Activated naive CD4-positive, alpha-beta T cell treated with anti-CD3 and anti-CD28 coated beads for 36 hours (primary cell): ENCODE measurements at regions of chr20 and their contacts with region 1.

Region 1: DNA sequence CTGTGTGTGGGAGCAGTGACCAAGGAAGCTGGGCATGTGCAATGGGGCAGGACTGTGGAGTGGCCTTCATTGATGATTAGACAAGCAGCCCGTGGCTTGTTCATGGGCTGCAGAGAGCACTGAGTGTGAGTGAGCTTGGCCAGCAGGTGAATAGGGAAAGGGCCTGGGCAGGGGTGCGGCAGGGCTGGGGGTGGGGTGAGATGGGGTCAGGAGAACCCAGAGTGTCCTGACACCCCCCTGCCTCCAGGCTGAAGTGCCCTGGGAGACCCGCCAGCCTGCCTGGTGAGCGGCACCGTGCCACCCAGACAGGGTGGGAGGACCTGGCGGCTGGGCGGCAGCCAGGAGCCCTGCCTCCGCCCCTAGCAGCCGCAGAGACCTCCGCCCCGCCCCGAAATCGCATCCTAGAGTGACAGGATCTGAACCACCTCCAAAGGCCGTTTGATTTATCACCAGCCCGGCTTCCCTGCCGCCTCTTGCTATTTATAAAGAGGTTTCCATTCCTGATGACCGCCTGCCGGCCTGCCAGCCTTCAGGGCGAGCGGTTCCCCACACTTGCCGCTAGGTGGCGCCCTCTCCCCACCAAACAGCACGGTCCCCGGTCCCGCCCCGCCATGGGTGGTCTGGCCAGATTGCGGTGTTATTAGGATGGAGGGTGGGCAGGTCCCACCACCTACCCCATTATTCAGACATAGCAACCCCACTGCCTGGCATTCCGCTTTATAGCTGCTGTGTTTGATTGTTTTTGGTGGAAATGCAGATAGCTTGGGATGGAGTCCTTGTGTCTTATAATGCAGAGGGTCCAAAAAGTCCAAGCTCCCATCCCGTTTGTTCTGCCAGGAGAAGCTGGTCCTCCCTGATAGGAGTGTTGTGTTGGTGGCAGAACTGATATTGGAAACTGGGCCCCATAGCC is 3.5 kb downstream of the MYLK2 start:
- DNase-seq: peak; percentile 79
- H3K4me3 Mint-ChIP-seq: no peak overlapping the region
- H3K27ac Mint-ChIP-seq: no peak overlapping the region
- H3K4me1 Mint-ChIP-seq: peaks cover 4% of the 10 kb centered on the region
- H3K27me3 Mint-ChIP-seq: peaks cover 3% of the 10 kb centered on the region

Region 2: DNA sequence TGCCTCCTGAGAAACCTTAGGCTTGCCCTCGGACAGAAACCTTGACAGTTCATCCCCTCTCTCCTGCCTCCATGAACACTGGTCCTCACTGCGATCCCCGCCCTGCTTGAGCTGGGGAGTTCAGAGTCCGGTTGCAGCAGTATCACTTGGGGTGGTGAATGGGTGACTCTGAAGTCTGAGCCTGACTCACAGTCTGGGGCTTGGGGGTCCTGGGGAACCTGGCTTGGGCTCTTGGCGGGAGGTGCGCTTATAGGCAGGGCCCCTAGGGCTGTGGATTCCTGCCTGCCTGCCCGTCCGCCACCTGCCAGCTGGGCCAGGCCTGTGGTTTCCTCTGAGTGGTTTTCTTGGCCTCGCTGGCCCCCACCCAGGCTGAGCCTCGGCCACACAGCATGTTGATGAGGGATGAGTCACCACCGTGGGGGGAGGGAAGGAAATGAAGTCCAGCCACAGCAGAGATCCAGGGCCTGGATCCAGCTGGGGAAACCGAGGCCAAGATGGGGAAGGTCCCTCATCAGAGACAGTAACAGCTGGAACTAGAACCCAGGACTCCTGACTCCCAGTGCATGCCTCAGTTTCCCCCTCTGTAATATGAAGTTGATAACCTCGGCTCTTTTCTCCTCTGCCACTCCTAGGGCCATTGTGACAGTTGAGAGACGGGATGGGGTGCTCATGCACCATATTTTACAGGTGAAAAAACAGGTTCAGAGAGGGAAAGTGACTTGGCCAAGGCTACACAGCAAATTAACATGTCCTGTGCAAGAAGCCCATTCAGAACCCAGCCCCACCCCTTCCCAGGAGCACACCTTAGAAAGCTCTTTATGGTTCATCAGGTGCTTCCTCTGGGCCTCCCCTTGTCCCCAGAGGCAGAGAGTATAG is 13.5 kb after region 1 on chr20:
- CTCF ChIA-PET with region 1: interaction called, 18 read pairs
- intact Hi-C with region 1: no loop called
- DNase-seq: peak; percentile 18
- H3K4me3 Mint-ChIP-seq: no peak overlapping the region
- H3K27ac Mint-ChIP-seq: no peak overlapping the region
- H3K4me1 Mint-ChIP-seq: peaks cover 3% of the 10 kb centered on the region
- H3K27me3 Mint-ChIP-seq: no peaks in the 10 kb centered on the region

Region 3: DNA sequence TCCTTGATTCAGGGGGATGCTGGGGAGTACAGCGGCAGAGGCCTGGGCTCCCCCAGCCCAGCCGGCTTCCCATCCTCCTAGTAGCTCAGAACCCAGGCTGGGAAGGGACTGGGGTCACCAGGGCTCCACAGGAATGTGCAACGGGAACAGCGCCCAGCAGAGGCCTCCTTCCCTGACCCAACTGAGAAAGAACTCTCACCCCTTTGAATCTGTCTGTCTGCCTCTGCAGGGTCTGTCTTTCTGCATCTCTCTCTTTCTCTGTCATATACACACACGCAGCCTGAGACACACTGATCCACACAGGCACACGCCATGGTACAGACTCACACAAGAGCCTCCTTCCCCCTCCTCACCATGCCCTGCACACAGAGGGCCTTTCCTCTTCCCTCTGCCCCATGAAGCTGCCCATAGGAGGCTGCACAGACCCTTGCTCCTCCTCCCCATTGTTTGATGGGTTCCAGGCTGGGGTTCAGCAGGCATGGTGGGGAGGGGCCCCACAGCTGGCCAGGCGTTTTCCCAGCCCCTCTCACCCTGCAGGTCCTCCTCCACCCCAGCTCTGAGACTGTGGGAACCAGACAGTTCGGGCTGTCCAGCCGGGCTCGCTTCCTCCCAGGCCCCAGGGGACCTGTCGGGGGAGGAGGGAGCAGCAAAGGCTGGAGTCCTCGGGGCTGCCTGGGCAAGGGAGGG is 19.9 kb after region 1 on chr20:
- CTCF ChIA-PET with region 1: interaction called, 53 read pairs
- intact Hi-C with region 1: loop called (anchors 1 kb)
- DNase-seq: no peak
- H3K4me3 Mint-ChIP-seq: no peak overlapping the region
- H3K27ac Mint-ChIP-seq: no peak overlapping the region
- H3K4me1 Mint-ChIP-seq: no peaks in the 10 kb centered on the region
- H3K27me3 Mint-ChIP-seq: peaks cover 1% of the 10 kb centered on the region

Region 4: DNA sequence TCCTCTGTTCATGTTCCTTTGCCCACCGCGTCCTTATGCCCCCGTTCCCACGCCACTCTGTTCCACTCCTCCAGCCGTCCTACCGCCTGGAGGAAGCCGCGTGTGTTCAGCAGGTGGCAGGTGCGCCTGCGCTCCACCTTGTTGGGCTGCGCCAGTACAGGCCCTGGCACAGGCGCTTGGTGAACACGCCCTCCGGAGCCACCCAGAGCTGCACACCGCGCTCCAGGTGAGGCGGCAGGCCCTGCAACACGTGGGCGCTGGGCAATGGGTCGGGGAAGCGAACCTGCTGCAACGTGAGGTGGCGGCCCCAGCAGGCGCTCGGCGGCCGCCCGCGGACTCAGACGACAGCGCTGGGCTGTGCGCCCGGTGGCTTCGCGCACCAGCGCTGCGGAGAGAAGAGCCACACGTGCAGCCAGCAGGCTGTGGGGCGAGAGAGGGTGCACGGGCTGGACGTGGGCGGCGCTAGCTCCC is 26.8 kb after region 1 on chr20:
- CTCF ChIA-PET with region 1: interaction called, 53 read pairs
- intact Hi-C with region 1: loop called (anchors 1 kb)
- DNase-seq: no peak
- H3K4me3 Mint-ChIP-seq: no peak overlapping the region
- H3K27ac Mint-ChIP-seq: no peak overlapping the region
- H3K4me1 Mint-ChIP-seq: no peaks in the 10 kb centered on the region
- H3K27me3 Mint-ChIP-seq: peaks cover 21% of the 10 kb centered on the region

Region 5: DNA sequence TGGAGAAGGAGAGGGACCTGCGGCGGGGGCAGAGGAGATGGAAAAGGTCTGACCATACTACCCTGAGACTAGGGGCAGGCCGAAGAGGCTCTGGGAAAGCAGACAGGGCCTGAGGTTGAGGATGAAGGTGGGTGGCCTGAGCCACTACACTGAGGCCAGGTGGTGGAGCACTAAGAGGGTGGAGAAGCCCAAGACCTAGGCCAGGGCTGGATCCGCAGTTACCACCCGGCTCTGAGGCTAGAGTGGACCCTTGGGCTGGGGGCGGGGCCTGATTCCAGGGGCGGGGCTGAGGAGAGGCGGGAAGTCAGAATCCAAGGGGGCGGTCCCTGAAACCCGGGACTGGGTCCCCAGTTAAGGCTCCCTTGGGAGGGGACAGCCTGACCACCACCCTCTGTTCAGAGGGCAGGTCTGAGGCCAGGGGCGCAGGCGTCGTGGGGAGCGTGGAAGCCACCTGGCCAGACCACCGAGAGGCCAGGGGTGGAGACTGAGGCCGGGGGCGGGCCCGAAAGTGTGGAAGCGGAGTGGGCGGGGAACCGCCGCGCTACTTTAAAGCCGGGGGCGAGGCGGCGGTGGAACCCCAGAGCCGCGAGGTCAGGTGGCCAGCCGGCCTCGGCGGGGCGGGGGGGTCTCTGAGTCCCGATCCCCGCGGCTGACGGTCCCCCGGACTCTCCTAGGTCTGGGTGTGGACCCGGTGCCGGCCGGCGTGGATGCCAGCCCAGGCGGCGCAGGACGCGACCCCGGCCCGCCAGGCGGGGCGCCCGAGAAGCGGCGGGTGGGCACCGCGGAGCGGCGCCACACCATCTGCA is 195.8 kb after region 1 on chr20:
- CTCF ChIA-PET with region 1: no interaction called
- intact Hi-C with region 1: loop called (anchors 5 kb)
- DNase-seq: peak; percentile 58
- H3K4me3 Mint-ChIP-seq: peak overlapping the region; percentile 74
- H3K27ac Mint-ChIP-seq: no peak overlapping the region
- H3K4me1 Mint-ChIP-seq: peaks cover 16% of the 10 kb centered on the region
- H3K27me3 Mint-ChIP-seq: peaks cover 60% of the 10 kb centered on the region

Region 6: DNA sequence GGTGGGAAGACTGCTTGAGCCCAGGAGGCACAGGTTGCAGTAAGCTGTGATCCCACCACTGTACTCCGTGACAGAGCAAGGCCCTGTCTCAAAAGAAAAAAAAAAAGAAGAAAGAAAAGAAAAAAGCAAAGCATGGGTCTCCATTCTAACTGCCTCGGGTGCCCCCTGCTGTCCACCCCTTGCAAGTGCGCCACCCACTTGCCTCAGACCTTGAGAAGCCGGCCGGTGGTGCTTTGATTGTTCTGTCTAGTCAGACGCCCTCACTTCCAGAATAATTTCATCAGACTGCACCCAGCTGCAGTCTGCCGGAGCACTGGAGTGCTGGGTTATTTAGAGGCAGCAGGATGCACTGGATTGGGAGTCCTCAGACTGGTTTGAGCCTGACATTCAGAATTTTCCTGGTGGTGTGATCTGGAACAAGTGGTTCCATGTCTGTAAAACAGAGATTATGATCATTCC is 269.2 kb after region 1 on chr20:
- CTCF ChIA-PET with region 1: interaction called, 34 read pairs
- intact Hi-C with region 1: loop called (anchors 1 kb)
- DNase-seq: peak; percentile 92
- H3K4me3 Mint-ChIP-seq: no peak overlapping the region
- H3K27ac Mint-ChIP-seq: no peak overlapping the region
- H3K4me1 Mint-ChIP-seq: no peaks in the 10 kb centered on the region
- H3K27me3 Mint-ChIP-seq: no peaks in the 10 kb centered on the region